Ovary (tissue), 10 donors: ENCODE measurements at regions of chr6 and their contacts with region 1.

Region 1: GRCh38 chr6:145453376-145453775 is 281.9 kb downstream of the EPM2A start:
- DNase-seq: no peak
- H3K4me3 ChIP-seq: no peak overlapping the region
- H3K27ac ChIP-seq: no peak overlapping the region
- H3K4me1 ChIP-seq: no peaks in the 10 kb centered on the region
- H3K27me3 ChIP-seq: no peaks in the 10 kb centered on the region
- CTCF ChIP-seq: no peak
- EP300 ChIP-seq: no peak
- POLR2A ChIP-seq: no peak

Region 2: GRCh38 chr6:144314003-144314485 is 1139.3 kb before region 1 on chr6:
- intact Hi-C with region 1: no loop called
- DNase-seq: peak; percentile 59 to 72 (median 69)
- H3K4me3 ChIP-seq: no peak overlapping the region
- H3K27ac ChIP-seq: peak overlapping the region; percentile 55 to 81
- H3K4me1 ChIP-seq: peaks cover 25% of the 10 kb centered on the region
- H3K27me3 ChIP-seq: no peaks in the 10 kb centered on the region
- CTCF ChIP-seq: no peak
- EP300 ChIP-seq: no peak
- POLR2A ChIP-seq: no peak

Region 3: DNA sequence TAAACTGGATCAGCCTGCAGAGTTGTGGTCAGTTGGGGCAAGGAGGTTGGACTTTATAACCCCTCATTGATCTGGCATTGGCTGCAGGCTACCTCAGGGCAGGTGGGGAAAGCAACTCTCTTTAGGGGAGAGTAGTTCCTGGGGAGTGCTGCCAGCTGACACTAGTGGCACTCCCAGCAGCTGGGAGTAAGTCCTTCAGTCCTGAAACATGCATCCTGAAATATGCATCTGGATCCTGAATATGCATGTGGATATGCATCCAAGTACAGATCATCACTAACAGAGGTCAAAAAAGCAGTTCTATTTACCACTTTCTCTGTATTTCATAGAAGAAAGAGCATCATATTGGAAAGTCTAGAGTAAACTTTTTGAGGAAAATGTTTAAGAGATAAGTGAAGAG is 68.9 kb before region 1 on chr6:
- intact Hi-C with region 1: loop called in 1 of 4 experiments (anchors 2 kb)
- DNase-seq: no peak
- H3K4me3 ChIP-seq: no peak overlapping the region
- H3K27ac ChIP-seq: no peak overlapping the region
- H3K4me1 ChIP-seq: no peaks in the 10 kb centered on the region
- H3K27me3 ChIP-seq: no peaks in the 10 kb centered on the region
- CTCF ChIP-seq: no peak
- EP300 ChIP-seq: no peak
- POLR2A ChIP-seq: no peak

Region 4: GRCh38 chr6:146103416-146104072 is 650.2 kb after region 1 on chr6:
- intact Hi-C with region 1: loop called in 1 of 4 experiments (anchors 10 kb)
- DNase-seq: no peak
- H3K4me3 ChIP-seq: no peak overlapping the region
- H3K27ac ChIP-seq: no peak overlapping the region
- H3K4me1 ChIP-seq: no peaks in the 10 kb centered on the region
- H3K27me3 ChIP-seq: no peaks in the 10 kb centered on the region
- CTCF ChIP-seq: no peak
- EP300 ChIP-seq: no peak
- POLR2A ChIP-seq: no peak